Breast epithelium (tissue), 4 donors: ENCODE measurements at regions of chr16 and their contacts with region 1.

Region 1: DNA sequence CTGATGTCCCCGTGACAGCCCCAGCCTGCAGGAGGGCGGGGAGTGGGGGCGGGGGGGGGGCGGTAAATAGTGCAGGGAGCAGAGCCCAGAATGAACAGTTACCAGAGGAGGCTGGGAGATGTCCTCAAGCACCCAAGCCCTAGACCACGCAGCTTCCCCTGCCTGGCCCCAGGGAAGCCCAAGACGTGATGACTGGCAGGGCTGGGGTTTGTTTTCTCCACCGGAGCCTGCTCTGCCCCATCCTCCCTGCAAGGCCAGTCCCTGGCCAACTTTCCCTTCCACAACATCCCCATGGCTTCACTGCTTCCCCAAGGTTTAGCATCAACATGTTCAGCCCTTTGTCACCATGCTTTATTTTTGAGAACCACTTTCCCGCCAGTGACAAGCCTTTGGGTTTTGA is 1.4 kb upstream of the BEAN1 start:
- DNase-seq: no peak
- H3K4me3 ChIP-seq: no peak overlapping the region
- H3K27ac ChIP-seq: no peak overlapping the region
- H3K4me1 ChIP-seq: peaks cover 0 to 4% of the 10 kb centered on the region in 2 donors
- H3K27me3 ChIP-seq: peaks cover 2 to 8% of the 10 kb centered on the region in 2 donors
- CTCF ChIP-seq: no peak
- POLR2A ChIP-seq: no peak

Region 2: GRCh38 chr16:66395806-66396555 is 29.7 kb before region 1 on chr16:
- intact Hi-C with region 1: no loop called
- DNase-seq: no peak
- H3K4me3 ChIP-seq: no peak overlapping the region
- H3K27ac ChIP-seq: no peak overlapping the region
- H3K4me1 ChIP-seq: no peaks in the 10 kb centered on the region
- H3K27me3 ChIP-seq: peaks cover 0 to 2% of the 10 kb centered on the region in 2 donors
- CTCF ChIP-seq: no peak
- POLR2A ChIP-seq: no peak

Region 3: GRCh38 chr16:66406534-66407221 is 19.0 kb before region 1 on chr16:
- intact Hi-C with region 1: no loop called
- DNase-seq: peak; percentile 71 to 88
- H3K4me3 ChIP-seq: peak overlapping the region; percentile 34 to 77 (median 56)
- H3K27ac ChIP-seq: peak overlapping the region in 1 of 2 donors; percentile 33
- H3K4me1 ChIP-seq: peaks cover 0 to 7% of the 10 kb centered on the region in 2 donors
- H3K27me3 ChIP-seq: no peaks in the 10 kb centered on the region
- CTCF ChIP-seq: peak; percentile 89 to 96 (median 90)
- POLR2A ChIP-seq: no peak

Region 4: DNA sequence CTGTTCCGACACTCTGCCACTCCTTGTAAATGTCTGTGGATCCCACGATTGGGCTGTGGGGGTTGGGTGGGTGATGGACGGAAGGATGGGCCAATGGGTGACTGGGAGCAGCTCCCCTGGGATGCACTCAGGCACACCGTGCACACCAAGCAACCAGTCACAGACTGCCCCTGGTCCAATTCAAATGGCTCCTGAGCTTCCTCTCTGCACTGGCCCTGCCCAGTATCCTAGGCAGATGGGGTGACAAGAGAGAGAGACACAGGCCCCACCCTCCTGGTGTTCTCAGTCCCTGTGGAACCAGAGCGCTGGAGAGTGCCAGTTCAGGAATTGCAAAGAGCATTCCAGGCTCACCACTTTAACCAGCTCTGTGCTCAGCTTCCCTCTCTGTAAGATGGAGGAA is 34.2 kb after region 1 on chr16:
- intact Hi-C with region 1: loop called (anchors 1 kb)
- DNase-seq: no peak
- H3K4me3 ChIP-seq: no peak overlapping the region
- H3K27ac ChIP-seq: no peak overlapping the region
- H3K4me1 ChIP-seq: no peaks in the 10 kb centered on the region
- H3K27me3 ChIP-seq: peaks cover 0 to 7% of the 10 kb centered on the region in 2 donors
- CTCF ChIP-seq: no peak
- POLR2A ChIP-seq: no peak